OCI-LY7 (cell line): ENCODE measurements at regions of chr3 and their contacts with region 1.

Region 1: GRCh38 chr3:102238357-102238756 is 196.5 kb upstream of the ZPLD1 start:
- DNase-seq: no peak
- H3K4me3 ChIP-seq: no peak overlapping the region
- H3K27ac ChIP-seq: no peak overlapping the region
- H3K4me1 ChIP-seq: peaks cover 44% of the 10 kb centered on the region
- CTCF ChIP-seq: no peak

Region 2: GRCh38 chr3:100662113-100662813 is 1576.1 kb before region 1 on chr3:
- CTCF ChIA-PET with region 1: no interaction called
- POLR2A ChIA-PET with region 1: interaction called, 10 read pairs
- intact Hi-C with region 1: no loop called
- DNase-seq: no peak
- H3K4me3 ChIP-seq: no peak overlapping the region
- H3K27ac ChIP-seq: no peak overlapping the region
- H3K4me1 ChIP-seq: no peaks in the 10 kb centered on the region
- CTCF ChIP-seq: no peak

Region 3: DNA sequence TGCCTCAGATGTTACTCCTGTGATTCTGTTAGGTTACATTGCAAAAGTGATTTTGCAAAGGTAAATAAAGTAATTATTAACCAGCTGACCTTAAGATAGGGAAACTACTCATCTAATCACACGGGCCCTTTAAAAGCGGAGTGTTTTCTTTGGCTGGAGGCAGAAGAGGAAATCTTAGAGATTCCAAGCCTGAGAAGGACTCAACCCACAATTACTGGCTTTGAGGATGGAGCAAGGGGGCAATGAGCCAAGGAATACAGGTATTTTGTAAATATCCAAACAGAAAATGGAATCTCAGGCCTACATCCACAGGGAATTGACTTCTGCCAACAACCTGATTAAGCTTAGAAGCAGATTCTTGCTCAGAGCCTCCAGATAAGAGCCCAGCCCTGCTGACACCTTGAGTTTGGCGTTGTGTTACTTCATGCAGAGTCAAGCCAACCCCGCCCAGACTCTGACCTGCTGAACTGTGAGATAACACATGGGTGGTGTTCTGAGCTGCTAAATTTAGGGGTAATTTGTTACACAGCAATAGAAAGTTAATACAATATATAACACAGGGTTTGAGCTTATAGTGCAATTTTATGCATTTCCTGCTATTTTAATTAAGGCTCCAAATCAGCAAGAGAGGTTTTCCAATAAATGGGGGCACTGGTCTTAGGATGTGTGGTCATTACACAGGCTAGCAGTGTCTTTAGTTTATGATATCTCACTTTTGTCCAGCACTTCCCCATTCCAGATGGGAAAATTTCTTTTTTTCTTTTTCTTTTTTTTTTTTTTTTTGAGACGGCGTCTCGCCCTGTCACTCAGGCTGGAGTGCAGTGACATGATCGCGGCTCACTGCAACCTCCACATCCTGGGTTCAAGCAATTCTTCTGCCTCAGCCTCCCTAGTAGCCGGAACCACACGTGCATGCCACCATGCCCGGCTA is 369.6 kb before region 1 on chr3:
- CTCF ChIA-PET with region 1: no interaction called
- POLR2A ChIA-PET with region 1: no interaction called
- intact Hi-C with region 1: no loop called
- DNase-seq: no peak
- H3K4me3 ChIP-seq: no peak overlapping the region
- H3K27ac ChIP-seq: no peak overlapping the region
- H3K4me1 ChIP-seq: no peaks in the 10 kb centered on the region
- CTCF ChIP-seq: no peak

Region 4: GRCh38 chr3:102374863-102375634 is 136.7 kb after region 1 on chr3:
- CTCF ChIA-PET with region 1: no interaction called
- POLR2A ChIA-PET with region 1: no interaction called
- intact Hi-C with region 1: no loop called
- DNase-seq: peak; percentile 11
- H3K4me3 ChIP-seq: no peak overlapping the region
- H3K27ac ChIP-seq: no peak overlapping the region
- H3K4me1 ChIP-seq: no peaks in the 10 kb centered on the region
- CTCF ChIP-seq: no peak